ENCODE measurements at regions of chr17 and their contacts with region 1.

Region 1: DNA sequence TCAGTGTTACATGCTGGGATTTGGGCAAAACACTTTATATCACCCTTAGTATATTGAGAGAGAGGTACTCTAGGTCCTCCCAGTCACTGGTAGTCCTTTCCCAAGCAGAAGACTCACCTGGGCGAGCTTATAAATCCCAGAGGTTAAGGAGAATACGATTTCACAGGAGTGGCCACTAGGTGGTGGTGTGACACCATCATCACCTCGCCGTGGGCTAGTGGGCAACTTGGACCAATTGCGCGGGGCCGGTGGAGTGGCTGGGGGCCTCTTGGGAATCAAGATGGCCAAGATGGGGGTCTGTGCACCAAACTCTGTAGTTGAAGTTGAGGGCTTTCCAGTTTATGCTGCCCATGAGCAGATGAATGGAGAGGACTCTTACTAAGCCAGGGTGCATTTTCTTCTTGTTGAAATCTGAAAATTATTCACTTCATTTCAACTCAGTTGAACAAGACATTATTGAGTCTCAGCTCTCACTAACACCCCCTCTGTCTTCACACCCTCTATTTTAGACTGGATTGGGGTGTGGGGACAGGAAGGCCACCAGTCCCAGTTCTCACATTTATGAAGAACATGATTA is 38.2 kb upstream of the PIRT start:
- DNase-seq: no peak
- H3K4me3 Mint-ChIP-seq: no peak overlapping the region
- H3K27ac Mint-ChIP-seq: no peak overlapping the region
- H3K4me1 Mint-ChIP-seq: no peaks in the 10 kb centered on the region
- H3K27me3 Mint-ChIP-seq: no peaks in the 10 kb centered on the region

Region 2: GRCh38 chr17:11296994-11297393 is 420.9 kb after region 1 on chr17:
- intact Hi-C with region 1: loop called (anchors 5 kb)
- DNase-seq: no peak
- H3K4me3 Mint-ChIP-seq: no peak overlapping the region
- H3K27ac Mint-ChIP-seq: no peak overlapping the region
- H3K4me1 Mint-ChIP-seq: no peaks in the 10 kb centered on the region
- H3K27me3 Mint-ChIP-seq: no peaks in the 10 kb centered on the region

Region 3: GRCh38 chr17:11644261-11645212 is 768.5 kb after region 1 on chr17:
- intact Hi-C with region 1: loop called (anchors 5 kb)
- DNase-seq: no peak
- H3K4me3 Mint-ChIP-seq: no peak overlapping the region
- H3K27ac Mint-ChIP-seq: no peak overlapping the region
- H3K4me1 Mint-ChIP-seq: no peaks in the 10 kb centered on the region
- H3K27me3 Mint-ChIP-seq: no peaks in the 10 kb centered on the region

Region 4: GRCh38 chr17:11690681-11691080 is 814.6 kb after region 1 on chr17:
- intact Hi-C with region 1: no loop called
- DNase-seq: no peak
- H3K4me3 Mint-ChIP-seq: no peak overlapping the region
- H3K27ac Mint-ChIP-seq: no peak overlapping the region
- H3K4me1 Mint-ChIP-seq: no peaks in the 10 kb centered on the region
- H3K27me3 Mint-ChIP-seq: no peaks in the 10 kb centered on the region

Measured in activated T-helper 2 cell treated with anti-CD3 and anti-CD28 coated beads, Interferon-gamma antibody, Interleukin-2, Interleukin-4, amounts not matched to agents 10 μg/mL and 5 μg/mL and 100 μg/mL, durations not matched to agents 14 hours and 24 hours and 36 hours (primary cell).